ENCODE measurements at regions of chr6 and their contacts with region 1.

Region 1: GRCh38 chr6:149846321-149846720 is 17.8 kb downstream of the LRP11 start:
- DNase-seq: peak; percentile 74
- H3K4me3 ChIP-seq: no peak overlapping the region
- H3K27ac ChIP-seq: peak overlapping the region; percentile 12
- H3K4me1 ChIP-seq: peaks cover 34% of the 10 kb centered on the region
- H3K27me3 ChIP-seq: no peaks in the 10 kb centered on the region
- CTCF ChIP-seq: no peak

Region 2: DNA sequence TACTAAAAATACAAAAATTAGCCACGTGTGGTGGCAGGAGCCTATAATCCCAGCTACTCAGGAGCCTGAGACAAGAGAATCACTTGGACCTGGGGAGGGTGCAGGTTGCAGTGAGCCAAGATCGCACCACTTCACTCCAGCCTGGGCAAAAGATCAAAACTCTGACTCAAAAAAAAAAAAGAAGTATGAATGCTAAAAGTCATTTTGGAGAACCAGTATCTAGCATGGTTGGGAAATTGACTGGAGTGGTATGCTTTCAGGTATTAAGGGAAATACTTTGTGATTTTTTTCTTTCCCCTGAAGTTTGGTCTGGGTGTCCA is 66.7 kb before region 1 on chr6:
- CTCF ChIA-PET with region 1: no interaction called
- dilution Hi-C with region 1: no loop called
- in situ Hi-C with region 1: no loop called
- intact Hi-C with region 1: no loop called
- DNase-seq: no peak
- H3K4me3 ChIP-seq: no peak overlapping the region
- H3K27ac ChIP-seq: no peak overlapping the region
- H3K4me1 ChIP-seq: no peaks in the 10 kb centered on the region
- H3K27me3 ChIP-seq: no peaks in the 10 kb centered on the region
- CTCF ChIP-seq: no peak

Region 3: GRCh38 chr6:149887343-149887742 is 41.0 kb after region 1 on chr6:
- CTCF ChIA-PET with region 1: no interaction called
- dilution Hi-C with region 1: no loop called
- in situ Hi-C with region 1: no loop called
- intact Hi-C with region 1: loop called (anchors 2 kb)
- DNase-seq: peak; percentile 94
- H3K4me3 ChIP-seq: no peak overlapping the region
- H3K27ac ChIP-seq: peak overlapping the region; percentile 82
- H3K4me1 ChIP-seq: peaks cover 69% of the 10 kb centered on the region
- H3K27me3 ChIP-seq: no peaks in the 10 kb centered on the region
- CTCF ChIP-seq: no peak

Measured in mammary epithelial cell (primary cell).